GM12878 (cell line): ENCODE measurements at regions of chrX and their contacts with region 1.

Region 1: GRCh38 chrX:136909706-136910564 is 29.4 kb upstream of the RBMX start:
- DNase-seq: peak; percentile 56
- ATAC-seq: peak; percentile 87
- H3K4me3 ChIP-seq: peak overlapping the region; percentile 76
- H3K27ac ChIP-seq: peak overlapping the region; percentile 56
- H3K4me1 ChIP-seq: no peaks in the 10 kb centered on the region; the same call in 1 of the 2 replicates
- H3K27me3 ChIP-seq: no peaks in the 10 kb centered on the region
- CTCF ChIP-seq: no peak
- EP300 ChIP-seq: no peak
- POLR2A ChIP-seq: no peak
- RAD21 ChIP-seq: no peak

Region 2: GRCh38 chrX:136780763-136781162 is 129.2 kb before region 1 on chrX and contains the start of gene ARHGEF6:
- CTCF ChIA-PET with region 1: no interaction called
- POLR2A ChIA-PET with region 1: no interaction called
- RAD21 ChIA-PET with region 1: no interaction called
- SMC1A ChIA-PET with region 1: no interaction called
- in situ Hi-C with region 1: no loop called
- intact Hi-C with region 1: loop called (anchors 5 kb)
- DNase-seq: no peak
- ATAC-seq: peak; percentile 63
- H3K4me3 ChIP-seq: peak within 1 kb of the TSS; percentile 49
- H3K27ac ChIP-seq: peak within 1 kb of the TSS; percentile 79
- H3K4me1 ChIP-seq: peaks cover 7% of the 10 kb centered on the region; the same call in 1 of the 2 replicates
- H3K27me3 ChIP-seq: no peaks in the 10 kb centered on the region
- CTCF ChIP-seq: no peak
- EP300 ChIP-seq: no peak
- POLR2A ChIP-seq: no peak
- RAD21 ChIP-seq: no peak
- polyA plus RNA-seq, gene ARHGEF6: 5.4 to 6.5 TPM

Region 3: DNA sequence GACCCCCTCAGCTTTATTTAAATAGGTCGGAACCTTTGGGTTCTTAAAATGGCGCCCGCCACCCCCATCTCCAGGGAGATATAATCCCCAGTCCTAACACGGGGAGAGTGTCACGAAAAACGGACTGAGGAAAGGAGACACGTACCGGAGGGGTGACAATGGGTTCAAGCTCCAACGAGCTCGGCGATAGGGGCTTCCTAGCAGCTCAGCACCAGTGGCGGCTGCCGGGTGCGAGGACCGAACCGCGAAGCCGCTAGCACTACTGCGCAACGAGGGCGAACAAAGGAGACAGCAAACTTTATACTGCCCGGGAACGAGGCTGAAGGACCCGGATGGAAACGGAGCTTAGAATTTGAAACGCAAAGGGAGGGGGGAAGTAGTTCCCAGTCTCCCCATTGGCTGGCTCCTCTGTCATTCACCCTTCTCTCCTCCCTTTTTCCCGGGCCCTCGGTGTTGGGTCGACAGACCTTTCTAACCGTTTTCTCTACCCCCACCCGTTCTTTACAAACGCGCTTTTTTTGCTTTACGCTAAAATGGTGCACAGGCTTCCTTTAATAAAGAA is 29.4 kb before region 1 on chrX and contains the start of gene RBMX:
- CTCF ChIA-PET with region 1: no interaction called
- POLR2A ChIA-PET with region 1: interaction called, 7 read pairs
- RAD21 ChIA-PET with region 1: interaction called, 4 read pairs
- SMC1A ChIA-PET with region 1: no interaction called
- in situ Hi-C with region 1: no loop called
- intact Hi-C with region 1: loop called (anchors 1 kb)
- DNase-seq: peak; percentile 83
- ATAC-seq: peak; percentile 92
- H3K4me3 ChIP-seq: peak within 1 kb of the TSS; percentile 85
- H3K27ac ChIP-seq: peak within 1 kb of the TSS; percentile 93
- H3K4me1 ChIP-seq: no peaks in the 10 kb centered on the region; the same call in 1 of the 2 replicates
- H3K27me3 ChIP-seq: no peaks in the 10 kb centered on the region
- CTCF ChIP-seq: no peak
- EP300 ChIP-seq: no peak
- POLR2A ChIP-seq: peak; percentile 100
- RAD21 ChIP-seq: no peak
- polyA plus RNA-seq, gene RBMX: 299 to 332 TPM

Region 4: DNA sequence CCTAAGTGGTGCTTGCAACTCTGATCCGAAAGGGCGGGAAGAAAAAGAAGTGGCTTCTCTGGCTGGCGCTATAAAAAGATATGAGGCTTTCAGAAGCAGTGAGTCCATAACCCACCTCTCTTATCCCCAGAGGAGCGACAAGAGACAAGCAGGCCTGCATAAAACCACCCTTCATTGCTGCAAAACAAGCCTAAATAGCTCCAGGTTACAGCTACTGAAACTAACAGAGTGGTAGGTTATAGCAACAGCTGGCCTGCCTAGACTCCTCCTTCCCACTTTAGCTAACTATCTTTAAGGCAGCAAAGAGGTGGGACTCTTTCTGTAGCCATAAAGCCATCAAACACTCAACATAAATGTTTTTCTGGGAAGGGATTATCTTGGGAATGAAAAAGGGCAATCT is 368.9 kb after region 1 on chrX:
- CTCF ChIA-PET with region 1: no interaction called
- POLR2A ChIA-PET with region 1: no interaction called
- RAD21 ChIA-PET with region 1: no interaction called
- SMC1A ChIA-PET with region 1: no interaction called
- in situ Hi-C with region 1: no loop called
- intact Hi-C with region 1: no loop called
- DNase-seq: no peak
- ATAC-seq: no peak
- H3K4me3 ChIP-seq: no peak overlapping the region
- H3K27ac ChIP-seq: no peak overlapping the region
- H3K4me1 ChIP-seq: no peaks in the 10 kb centered on the region
- H3K27me3 ChIP-seq: no peaks in the 10 kb centered on the region
- CTCF ChIP-seq: no peak
- EP300 ChIP-seq: no peak
- POLR2A ChIP-seq: no peak
- RAD21 ChIP-seq: no peak